HepG2 (cell line): ENCODE measurements at regions of chr14 and their contacts with region 1.

Region 1: DNA sequence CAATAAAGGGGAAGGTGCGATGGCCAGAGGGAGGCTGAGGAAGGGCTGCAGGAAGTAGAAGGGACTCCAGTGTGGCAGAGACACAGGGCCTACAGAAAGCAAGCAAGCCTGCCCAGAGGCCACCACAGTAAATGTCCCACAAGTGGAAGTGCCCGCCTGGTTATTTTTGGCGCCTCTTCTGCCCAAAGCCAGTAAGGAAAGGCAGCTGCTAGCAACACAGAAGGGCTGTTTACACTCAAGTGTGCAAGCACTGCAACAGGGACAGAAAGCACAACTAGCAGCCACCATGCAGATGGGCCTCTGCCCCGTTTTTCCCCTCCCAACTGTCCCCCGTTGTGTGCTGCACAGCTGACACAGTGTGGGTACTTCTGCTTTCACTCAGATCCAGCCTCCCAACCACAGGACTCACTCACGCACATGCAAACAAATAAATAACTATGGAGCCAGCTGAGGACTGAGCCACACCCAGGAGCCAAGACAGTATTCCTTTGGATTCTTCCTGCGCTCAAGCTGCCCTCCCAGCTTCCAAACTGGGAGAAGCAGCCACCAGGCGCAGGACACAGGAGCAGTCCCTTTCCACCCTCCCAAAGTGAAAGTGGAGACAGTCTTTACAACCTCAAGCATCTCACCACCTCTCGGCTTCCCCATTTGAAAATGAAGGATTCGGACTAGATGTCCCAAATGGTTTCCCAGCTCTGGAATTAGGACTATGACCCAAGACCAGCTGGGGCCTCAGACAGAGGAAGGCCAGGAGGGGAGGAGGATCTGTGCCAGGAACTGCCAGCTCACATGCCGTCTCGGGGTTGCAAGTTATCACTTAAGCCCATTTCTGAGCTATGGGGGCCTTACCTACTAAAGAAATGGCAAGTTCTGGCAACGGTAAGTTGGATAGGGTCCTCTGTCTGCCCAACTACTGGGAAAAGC is 40.0 kb upstream of the PNMA1 start:
- DNase-seq: no peak
- ATAC-seq: peak; percentile 37
- H3K4me3 ChIP-seq: peak overlapping the region; percentile 18 to 65 (median 43)
- H3K27ac ChIP-seq: peak overlapping the region; percentile 84
- H3K4me1 ChIP-seq: peaks cover 97% of the 10 kb centered on the region
- H3K27me3 ChIP-seq: no peaks in the 10 kb centered on the region
- CTCF ChIP-seq: no peak
- EP300 ChIP-seq: no peak
- POLR2A ChIP-seq: no peak; a peak in 1 of 4 replicates
- RAD21 ChIP-seq: 0 out of 2 replicates have a peak, but pooled peaks have one; percentile 2

Region 2: GRCh38 chr14:73491256-73492042 is 262.8 kb before region 1 on chr14:
- CTCF ChIA-PET with region 1: no interaction called
- POLR2A ChIA-PET with region 1: no interaction called
- in situ Hi-C with region 1: no loop called
- intact Hi-C with region 1: no loop called
- DNase-seq: peak; percentile 54
- ATAC-seq: peak; percentile 88
- H3K4me3 ChIP-seq: peak overlapping the region; percentile 58 to 84 (median 70)
- H3K27ac ChIP-seq: peak overlapping the region; percentile 85
- H3K4me1 ChIP-seq: peaks cover 39% of the 10 kb centered on the region
- H3K27me3 ChIP-seq: no peaks in the 10 kb centered on the region
- CTCF ChIP-seq: no peak
- EP300 ChIP-seq: no peak
- POLR2A ChIP-seq: peak in 1 of 2 experiments; percentile 31; a peak in 2 of 4 replicates
- RAD21 ChIP-seq: peak; percentile 31

Region 3: GRCh38 chr14:73526569-73526968 is 227.7 kb before region 1 on chr14:
- CTCF ChIA-PET with region 1: no interaction called
- POLR2A ChIA-PET with region 1: no interaction called
- in situ Hi-C with region 1: no loop called
- intact Hi-C with region 1: no loop called
- DNase-seq: peak; percentile 57
- ATAC-seq: peak; percentile 87
- H3K4me3 ChIP-seq: no peak overlapping the region
- H3K27ac ChIP-seq: no peak overlapping the region
- H3K4me1 ChIP-seq: peaks cover 18% of the 10 kb centered on the region
- H3K27me3 ChIP-seq: no peaks in the 10 kb centered on the region
- CTCF ChIP-seq: no peak
- EP300 ChIP-seq: no peak
- POLR2A ChIP-seq: no peak
- RAD21 ChIP-seq: no peak

Region 4: DNA sequence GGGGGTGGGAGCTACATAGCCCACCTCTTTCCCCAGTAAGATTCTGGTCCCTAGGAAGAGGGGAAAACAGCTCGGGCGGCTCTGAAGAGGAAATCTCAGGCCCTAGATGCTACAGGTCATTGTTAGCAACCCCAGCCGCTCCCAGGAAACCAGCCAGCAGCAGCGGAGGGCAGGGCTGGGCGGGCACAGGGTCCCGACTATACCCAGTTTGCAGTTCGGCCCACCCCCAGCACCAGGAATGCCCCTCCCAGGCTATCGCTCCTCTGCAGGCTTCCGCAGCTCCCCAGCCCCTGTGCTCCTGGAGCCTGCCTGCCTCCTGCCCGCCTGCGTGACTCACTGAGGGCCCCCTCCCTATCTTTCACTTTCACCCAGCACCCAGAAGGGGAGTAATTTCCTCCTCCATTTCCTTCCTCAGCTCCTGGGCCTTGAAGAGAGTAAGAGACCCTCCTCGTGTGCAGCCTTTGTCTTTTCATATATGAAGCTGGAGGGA is 12.8 kb before region 1 on chr14:
- CTCF ChIA-PET with region 1: no interaction called
- POLR2A ChIA-PET with region 1: interaction called, 26 read pairs
- in situ Hi-C with region 1: no loop called
- intact Hi-C with region 1: no loop called
- DNase-seq: peak; percentile 61
- ATAC-seq: peak; percentile 72
- H3K4me3 ChIP-seq: peak overlapping the region; percentile 37 to 60 (median 41)
- H3K27ac ChIP-seq: peak overlapping the region; percentile 61
- H3K4me1 ChIP-seq: peaks cover 70% of the 10 kb centered on the region
- H3K27me3 ChIP-seq: no peaks in the 10 kb centered on the region
- CTCF ChIP-seq: peak; percentile 19; the same call in 1 of the 2 replicates
- EP300 ChIP-seq: no peak
- POLR2A ChIP-seq: no peak
- RAD21 ChIP-seq: no peak

Region 5: DNA sequence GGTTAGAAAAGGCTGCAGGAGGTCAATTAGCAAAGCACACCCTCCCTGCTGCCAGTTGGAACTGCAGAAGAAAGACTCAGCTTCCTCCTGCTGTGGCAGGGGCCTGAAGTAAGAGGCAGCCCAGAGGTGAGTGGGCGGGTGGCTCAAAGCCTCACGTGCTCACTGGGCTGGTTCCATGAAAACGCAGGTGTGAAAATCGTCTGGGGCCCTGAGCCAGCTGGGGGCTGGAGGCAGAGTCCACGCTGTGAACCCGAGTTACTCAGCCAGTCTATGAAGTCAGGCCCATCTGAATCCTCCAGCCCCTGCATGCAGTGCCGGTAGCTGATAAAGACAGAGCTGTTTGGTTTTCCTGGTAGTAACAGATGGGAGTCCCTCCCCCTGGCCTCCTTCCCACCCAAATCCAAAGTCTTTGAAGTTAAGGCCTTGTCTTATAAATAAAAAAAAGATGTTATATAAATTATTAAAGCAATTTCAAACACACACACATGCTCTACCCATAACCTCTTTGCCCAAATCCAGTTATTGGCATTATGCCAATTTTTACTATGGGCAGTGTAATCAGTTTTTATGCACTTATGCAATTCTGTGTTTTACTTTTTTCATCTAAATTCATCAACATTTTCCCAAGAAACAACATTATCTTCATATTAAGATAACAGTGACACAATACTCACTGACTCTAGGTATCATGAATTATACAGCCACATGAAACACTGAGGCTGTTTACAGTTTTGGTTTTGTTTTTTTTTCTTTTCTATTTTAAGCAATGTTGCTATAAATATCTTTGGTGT is 17.8 kb after region 1 on chr14:
- CTCF ChIA-PET with region 1: no interaction called
- POLR2A ChIA-PET with region 1: interaction called, 57 read pairs
- in situ Hi-C with region 1: no loop called
- intact Hi-C with region 1: no loop called
- DNase-seq: peak; percentile 94
- ATAC-seq: peak; percentile 95
- H3K4me3 ChIP-seq: peak overlapping the region in 1 of 3 experiments; percentile 27; a peak in 1 of 6 replicates
- H3K27ac ChIP-seq: peak overlapping the region; percentile 53
- H3K4me1 ChIP-seq: peaks cover 79% of the 10 kb centered on the region
- H3K27me3 ChIP-seq: no peaks in the 10 kb centered on the region
- CTCF ChIP-seq: peak; percentile 29
- EP300 ChIP-seq: peak in 1 of 2 experiments; percentile 69; a peak in 2 of 4 replicates
- POLR2A ChIP-seq: peak in 1 of 2 experiments; percentile 49; a peak in 1 of 4 replicates
- RAD21 ChIP-seq: peak; percentile 71

Region 6: GRCh38 chr14:73785873-73786695 is 31.9 kb after region 1 on chr14:
- CTCF ChIA-PET with region 1: no interaction called
- POLR2A ChIA-PET with region 1: interaction called, 115 read pairs
- in situ Hi-C with region 1: no loop called
- intact Hi-C with region 1: loop called (anchors 2 kb)
- DNase-seq: peak; percentile 95
- ATAC-seq: peak; percentile 87
- H3K4me3 ChIP-seq: peak overlapping the region; percentile 76 to 80 (median 79)
- H3K27ac ChIP-seq: peak overlapping the region; percentile 86
- H3K4me1 ChIP-seq: peaks cover 70% of the 10 kb centered on the region
- H3K27me3 ChIP-seq: no peaks in the 10 kb centered on the region; a peak in 1 of 5 replicates
- CTCF ChIP-seq: peak; percentile 36; the same call in 1 of the 2 replicates
- EP300 ChIP-seq: peak; percentile 81 to 87; a peak in 3 of 4 replicates
- POLR2A ChIP-seq: peak; percentile 84 to 86
- RAD21 ChIP-seq: peak; percentile 60

Region 7: DNA sequence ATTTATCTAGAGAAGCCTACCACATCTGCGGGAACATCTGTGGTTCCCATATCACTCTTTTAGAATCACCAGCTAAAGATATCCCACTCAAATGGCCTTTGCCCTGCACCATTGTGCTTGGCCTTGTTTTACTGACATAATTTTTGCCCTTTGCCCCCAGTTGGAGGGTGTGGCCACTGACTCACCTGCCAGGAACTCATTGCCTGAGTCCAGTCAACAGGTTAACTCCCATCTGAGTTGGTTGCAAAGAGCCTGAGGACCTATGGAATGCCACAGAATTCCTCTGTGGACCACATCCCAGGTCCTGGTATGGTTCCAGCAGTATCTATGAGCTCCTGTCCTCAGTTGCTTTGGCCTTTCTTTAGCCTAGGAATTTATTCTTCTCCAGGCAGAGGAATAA is 41.8 kb after region 1 on chr14:
- CTCF ChIA-PET with region 1: no interaction called
- POLR2A ChIA-PET with region 1: interaction called, 37 read pairs
- in situ Hi-C with region 1: no loop called
- intact Hi-C with region 1: no loop called
- DNase-seq: peak; percentile 93
- ATAC-seq: peak; percentile 84
- H3K4me3 ChIP-seq: no peak overlapping the region
- H3K27ac ChIP-seq: no peak overlapping the region
- H3K4me1 ChIP-seq: peaks cover 67% of the 10 kb centered on the region
- H3K27me3 ChIP-seq: no peaks in the 10 kb centered on the region; a peak in 1 of 5 replicates
- CTCF ChIP-seq: no peak
- EP300 ChIP-seq: peak in 1 of 2 experiments; percentile 79; a peak in 2 of 4 replicates
- POLR2A ChIP-seq: no peak
- RAD21 ChIP-seq: no peak

Region 8: DNA sequence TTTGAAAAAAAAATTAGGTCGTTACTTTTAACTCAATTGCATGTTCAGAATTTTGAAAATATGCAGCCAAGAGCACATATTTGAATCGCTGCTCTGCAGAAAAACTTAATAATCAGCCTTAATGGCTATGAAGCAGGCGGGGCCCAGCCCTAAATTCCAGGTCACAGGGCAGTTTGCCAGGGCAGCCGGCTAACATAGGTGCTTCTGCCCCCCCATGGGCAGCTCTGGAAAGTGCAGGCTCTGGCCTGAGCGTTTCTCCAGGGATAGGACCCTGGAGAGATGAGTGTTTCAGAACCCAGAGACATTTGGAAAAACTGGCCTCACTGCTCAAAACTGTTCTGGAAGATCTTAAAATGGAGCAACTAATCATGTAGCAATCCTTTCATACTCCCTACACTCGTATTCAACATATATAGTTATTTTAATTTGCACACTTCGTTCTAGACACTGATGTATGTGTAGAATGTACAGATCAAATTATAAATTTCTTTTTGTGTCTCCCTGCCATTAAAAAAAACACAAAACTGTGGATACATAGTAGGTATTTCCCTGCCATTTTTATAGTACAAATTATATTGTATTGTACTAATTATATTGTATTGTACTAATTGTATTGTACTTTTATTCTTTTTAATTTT is 71.4 kb after region 1 on chr14:
- CTCF ChIA-PET with region 1: no interaction called
- POLR2A ChIA-PET with region 1: no interaction called
- in situ Hi-C with region 1: loop called (anchors 10 kb)
- intact Hi-C with region 1: loop called (anchors 2 kb)
- DNase-seq: peak; percentile 69
- ATAC-seq: peak; percentile 92
- H3K4me3 ChIP-seq: no peak overlapping the region
- H3K27ac ChIP-seq: no peak overlapping the region
- H3K4me1 ChIP-seq: peaks cover 15% of the 10 kb centered on the region
- H3K27me3 ChIP-seq: peaks cover 0 to 2% of the 10 kb centered on the region in 2 experiments; a peak in 2 of 5 replicates
- CTCF ChIP-seq: peak; percentile 90
- EP300 ChIP-seq: no peak
- POLR2A ChIP-seq: no peak
- RAD21 ChIP-seq: peak; percentile 94